Sciatic nerve (tissue), 2 donors: ENCODE measurements at regions of chr11 and their contacts with region 1.

Region 1: GRCh38 chr11:15159085-15159484 is 44.4 kb downstream of the INSC start:
- DNase-seq: no peak
- ATAC-seq: no peak

Region 2: GRCh38 chr11:15182372-15182771 is 23.3 kb after region 1 on chr11:
- intact Hi-C with region 1: loop called (anchors 2 kb)
- DNase-seq: no peak
- ATAC-seq: no peak